ENCODE measurements at regions of chr6 and their contacts with region 1.

Region 1: GRCh38 chr6:22036275-22036674 is 260.6 kb downstream of the PRL start:
- DNase-seq: peak; percentile 92
- H3K4me3 Mint-ChIP-seq: peak overlapping the region; percentile 43
- H3K27ac Mint-ChIP-seq: peak overlapping the region; percentile 97
- H3K4me1 Mint-ChIP-seq: peaks cover 35% of the 10 kb centered on the region
- H3K27me3 Mint-ChIP-seq: no peaks in the 10 kb centered on the region
- CTCF ChIP-seq: no peak

Region 2: GRCh38 chr6:21748343-21749056 is 287.8 kb before region 1 on chr6:
- CTCF ChIA-PET with region 1: no interaction called
- intact Hi-C with region 1: no loop called
- DNase-seq: peak; percentile 46
- H3K4me3 Mint-ChIP-seq: no peak overlapping the region
- H3K27ac Mint-ChIP-seq: peak overlapping the region; percentile 2
- H3K4me1 Mint-ChIP-seq: peaks cover 57% of the 10 kb centered on the region
- H3K27me3 Mint-ChIP-seq: no peaks in the 10 kb centered on the region
- CTCF ChIP-seq: no peak

Region 3: GRCh38 chr6:21885532-21886114 is 150.7 kb before region 1 on chr6:
- CTCF ChIA-PET with region 1: no interaction called
- intact Hi-C with region 1: loop called (anchors 5 kb)
- DNase-seq: peak; percentile 86
- H3K4me3 Mint-ChIP-seq: no peak overlapping the region
- H3K27ac Mint-ChIP-seq: no peak overlapping the region
- H3K4me1 Mint-ChIP-seq: peaks cover 10% of the 10 kb centered on the region
- H3K27me3 Mint-ChIP-seq: no peaks in the 10 kb centered on the region
- CTCF ChIP-seq: no peak

Region 4: GRCh38 chr6:21953831-21954801 is 82.2 kb before region 1 on chr6:
- CTCF ChIA-PET with region 1: interaction called, 5 read pairs
- intact Hi-C with region 1: loop called (anchors 2 kb)
- DNase-seq: peak; percentile 34
- H3K4me3 Mint-ChIP-seq: no peak overlapping the region
- H3K27ac Mint-ChIP-seq: peak overlapping the region; percentile 40
- H3K4me1 Mint-ChIP-seq: peaks cover 44% of the 10 kb centered on the region
- H3K27me3 Mint-ChIP-seq: no peaks in the 10 kb centered on the region
- CTCF ChIP-seq: no peak

Region 5: GRCh38 chr6:21999012-21999528 is 37.2 kb before region 1 on chr6:
- CTCF ChIA-PET with region 1: interaction called, 4 read pairs
- intact Hi-C with region 1: loop called (anchors 2 kb)
- DNase-seq: no peak
- H3K4me3 Mint-ChIP-seq: no peak overlapping the region
- H3K27ac Mint-ChIP-seq: no peak overlapping the region
- H3K4me1 Mint-ChIP-seq: peaks cover 13% of the 10 kb centered on the region
- H3K27me3 Mint-ChIP-seq: no peaks in the 10 kb centered on the region
- CTCF ChIP-seq: no peak

Region 6: GRCh38 chr6:22164236-22164635 is 128.0 kb after region 1 on chr6:
- CTCF ChIA-PET with region 1: no interaction called
- intact Hi-C with region 1: no loop called
- DNase-seq: no peak
- H3K4me3 Mint-ChIP-seq: no peak overlapping the region
- H3K27ac Mint-ChIP-seq: no peak overlapping the region
- H3K4me1 Mint-ChIP-seq: no peaks in the 10 kb centered on the region
- H3K27me3 Mint-ChIP-seq: no peaks in the 10 kb centered on the region
- CTCF ChIP-seq: no peak